ENCODE measurements at regions of chr4 and their contacts with region 1.

Region 1: DNA sequence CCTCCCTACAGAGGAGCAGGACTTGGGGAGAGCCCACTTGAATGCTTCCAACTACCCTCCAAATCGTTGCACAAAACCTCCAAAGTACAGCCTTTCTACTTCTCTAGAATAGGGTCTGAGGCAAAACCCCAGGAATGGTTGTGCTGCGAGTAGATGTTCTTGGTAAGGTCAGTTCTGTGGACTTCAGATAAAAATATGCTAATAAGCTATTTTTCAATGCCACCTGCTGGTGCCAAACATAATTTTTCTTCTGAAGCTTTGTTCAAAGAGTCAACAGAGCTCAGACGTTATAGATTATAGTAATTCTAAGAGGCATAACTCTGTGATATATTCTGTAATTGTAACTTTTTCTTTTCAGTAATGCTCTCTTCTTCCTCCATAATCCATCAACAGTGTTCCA is 425.7 kb downstream of the GPAT3 start:
- DNase-seq: peak; percentile 55
- ATAC-seq: peak; percentile 63
- H3K4me3 ChIP-seq: no peak overlapping the region
- H3K27ac ChIP-seq: no peak overlapping the region
- H3K4me1 ChIP-seq: no peaks in the 10 kb centered on the region
- H3K27me3 ChIP-seq: no peaks in the 10 kb centered on the region
- CTCF ChIP-seq: peak; percentile 60

Region 2: DNA sequence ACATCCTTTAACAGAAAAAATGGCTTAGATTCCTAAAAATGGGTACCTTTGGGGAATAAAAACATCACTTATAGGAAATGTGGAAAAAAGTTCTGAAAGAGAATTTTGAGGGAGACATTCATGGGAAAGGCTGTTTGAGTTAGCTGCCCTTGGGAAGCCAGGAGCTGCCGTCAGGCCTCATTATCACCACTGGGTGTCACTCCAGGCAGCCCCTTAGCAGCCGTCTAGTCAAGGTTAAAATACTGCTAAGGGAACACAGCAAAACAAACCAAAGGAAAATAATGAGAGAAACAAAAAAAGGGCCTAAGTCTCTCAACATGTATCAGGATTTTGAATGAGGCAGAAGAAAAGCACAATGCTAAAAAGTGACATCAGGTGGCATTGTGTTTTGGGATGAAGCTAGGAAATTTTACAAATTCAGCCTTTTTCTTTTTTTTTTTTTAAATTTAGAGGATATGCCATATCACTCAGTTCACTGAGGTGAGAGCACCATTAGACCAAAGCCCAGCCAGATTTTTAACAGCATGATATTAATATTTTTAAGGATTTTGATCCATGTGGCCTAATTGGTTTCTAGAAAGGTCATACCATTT is 190.4 kb before region 1 on chr4:
- CTCF ChIA-PET with region 1: interaction called, 7 read pairs
- POLR2A ChIA-PET with region 1: no interaction called
- intact Hi-C with region 1: loop called (anchors 2 kb)
- DNase-seq: peak; percentile 42
- ATAC-seq: peak; percentile 54
- H3K4me3 ChIP-seq: no peak overlapping the region
- H3K27ac ChIP-seq: no peak overlapping the region
- H3K4me1 ChIP-seq: no peaks in the 10 kb centered on the region
- H3K27me3 ChIP-seq: no peaks in the 10 kb centered on the region
- CTCF ChIP-seq: peak; percentile 65

Measured in PC-3 (cell line).